ENCODE measurements at regions of chr9 and their contacts with region 1.

Region 1: DNA sequence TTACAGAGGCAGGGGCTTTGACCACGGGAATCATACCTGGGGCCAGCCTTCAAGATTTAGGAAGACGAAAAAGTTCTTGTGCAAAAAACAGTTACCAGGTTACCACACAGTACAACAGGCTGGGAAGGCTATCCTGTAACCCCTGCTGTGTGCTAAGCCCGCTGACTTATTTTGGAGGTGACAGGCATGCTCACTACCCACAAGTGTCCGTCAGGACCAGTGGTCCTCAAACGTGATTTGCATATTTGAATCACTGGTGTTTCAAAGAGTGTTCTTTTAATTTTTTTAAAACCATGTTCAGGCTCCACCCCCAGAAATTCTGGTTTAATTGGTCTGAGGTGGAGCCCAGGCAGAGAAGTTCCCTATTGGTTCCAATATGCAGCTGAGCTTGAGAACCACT is 146.6 kb downstream of the TTLL11 start:
- DNase-seq: no peak
- H3K4me3 Mint-ChIP-seq: no peak overlapping the region
- H3K27ac Mint-ChIP-seq: no peak overlapping the region
- H3K4me1 Mint-ChIP-seq: peaks cover 20% of the 10 kb centered on the region
- H3K27me3 Mint-ChIP-seq: no peaks in the 10 kb centered on the region
- CTCF ChIP-seq: no peak

Region 2: DNA sequence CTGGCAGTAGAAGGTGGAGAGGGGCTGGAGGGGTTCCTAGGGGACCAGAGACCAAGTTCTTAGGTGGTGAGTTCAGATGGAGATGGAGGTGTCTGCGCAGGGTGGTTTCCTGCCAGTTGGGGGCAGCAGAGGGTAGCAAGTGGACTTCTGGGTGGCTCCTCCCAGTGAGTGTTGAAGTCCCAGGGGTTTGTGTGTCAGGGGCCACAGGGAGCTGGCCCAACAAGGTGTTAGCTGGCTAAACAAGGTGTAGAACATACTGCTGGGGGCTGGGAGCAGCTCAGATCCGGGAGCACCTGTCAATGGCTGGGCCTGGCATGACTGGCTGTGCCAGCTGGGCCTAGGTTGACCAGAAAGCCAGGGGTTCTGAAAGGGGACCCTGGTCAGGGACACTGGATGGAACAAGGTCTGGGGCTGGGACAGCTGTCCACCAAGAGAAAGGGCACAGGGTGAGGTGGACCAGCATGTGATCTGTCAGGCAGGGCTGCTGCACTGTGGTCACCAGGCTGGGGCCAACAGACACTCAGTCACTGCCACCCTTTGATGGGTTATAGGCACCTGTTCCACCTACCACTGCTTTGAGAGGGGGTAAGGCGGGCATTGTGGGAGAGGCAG is 259.4 kb before region 1 on chr9:
- CTCF ChIA-PET with region 1: no interaction called
- intact Hi-C with region 1: no loop called
- DNase-seq: peak; percentile 86
- H3K4me3 Mint-ChIP-seq: no peak overlapping the region
- H3K27ac Mint-ChIP-seq: no peak overlapping the region
- H3K4me1 Mint-ChIP-seq: peaks cover 12% of the 10 kb centered on the region
- H3K27me3 Mint-ChIP-seq: no peaks in the 10 kb centered on the region
- CTCF ChIP-seq: peak; percentile 66

Region 3: DNA sequence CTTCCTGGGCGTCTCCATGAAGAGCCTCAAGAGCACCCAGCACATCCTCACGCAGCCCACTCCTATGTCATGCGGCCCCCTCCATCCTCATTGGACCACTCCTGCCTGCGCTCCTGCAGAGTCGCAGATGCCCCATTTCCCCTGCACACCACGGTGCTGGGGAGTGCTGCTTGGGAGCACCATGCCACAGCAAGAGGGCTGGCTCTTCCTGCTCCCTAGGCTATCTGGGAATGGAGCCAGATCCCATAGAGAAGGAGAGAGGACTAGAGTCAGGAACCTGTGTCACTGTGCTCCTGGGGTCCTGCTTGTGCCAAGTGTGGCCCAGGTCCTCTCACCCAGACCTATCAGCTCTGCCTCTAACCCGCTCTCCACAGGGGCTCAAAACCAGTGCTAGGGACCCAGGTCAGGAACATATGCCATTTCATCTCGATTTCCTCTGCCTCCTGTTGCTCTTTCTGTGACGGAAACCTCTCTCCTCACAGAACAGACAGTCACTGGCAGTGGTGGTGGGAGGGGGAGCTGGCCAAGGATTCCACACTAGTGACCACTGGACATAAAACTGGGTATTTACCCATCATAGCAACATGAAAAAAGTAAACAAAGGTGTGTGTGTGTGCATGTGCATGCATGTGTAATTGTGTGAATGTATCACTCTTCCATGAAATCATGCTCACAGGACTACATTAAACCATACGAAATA is 31.7 kb before region 1 on chr9:
- CTCF ChIA-PET with region 1: no interaction called
- intact Hi-C with region 1: no loop called
- DNase-seq: no peak
- H3K4me3 Mint-ChIP-seq: no peak overlapping the region
- H3K27ac Mint-ChIP-seq: no peak overlapping the region
- H3K4me1 Mint-ChIP-seq: peaks cover 20% of the 10 kb centered on the region
- H3K27me3 Mint-ChIP-seq: no peaks in the 10 kb centered on the region
- CTCF ChIP-seq: no peak

Region 4: GRCh38 chr9:121929893-121930875 is 16.3 kb before region 1 on chr9:
- CTCF ChIA-PET with region 1: interaction called, 11 read pairs
- intact Hi-C with region 1: no loop called
- DNase-seq: no peak
- H3K4me3 Mint-ChIP-seq: no peak overlapping the region
- H3K27ac Mint-ChIP-seq: no peak overlapping the region
- H3K4me1 Mint-ChIP-seq: no peaks in the 10 kb centered on the region
- H3K27me3 Mint-ChIP-seq: no peaks in the 10 kb centered on the region
- CTCF ChIP-seq: no peak

Region 5: DNA sequence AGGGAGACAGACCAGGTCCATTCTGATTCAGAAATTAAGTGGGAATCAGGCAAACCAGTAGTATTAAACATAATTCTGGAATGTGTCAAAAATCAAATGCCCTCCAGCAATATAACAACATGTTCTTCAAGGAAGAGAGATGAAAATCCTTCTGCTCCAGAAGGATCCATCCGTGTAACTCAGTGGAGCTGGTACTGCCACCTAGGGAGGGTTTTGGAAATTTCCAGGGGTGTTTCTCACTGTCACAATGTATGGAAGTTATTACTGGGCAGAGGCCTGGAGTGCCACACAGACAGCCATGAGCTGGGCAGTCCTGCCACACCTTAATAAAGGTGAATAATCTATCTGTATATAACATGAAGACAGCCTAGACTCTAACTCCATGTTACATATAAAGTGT is 59.1 kb after region 1 on chr9:
- CTCF ChIA-PET with region 1: no interaction called
- intact Hi-C with region 1: no loop called
- DNase-seq: peak; percentile 44
- H3K4me3 Mint-ChIP-seq: no peak overlapping the region
- H3K27ac Mint-ChIP-seq: no peak overlapping the region
- H3K4me1 Mint-ChIP-seq: no peaks in the 10 kb centered on the region
- H3K27me3 Mint-ChIP-seq: no peaks in the 10 kb centered on the region
- CTCF ChIP-seq: peak; percentile 22

Measured in Calu3 (cell line).